ENCODE measurements at regions of chr3 and their contacts with region 1.

Region 1: DNA sequence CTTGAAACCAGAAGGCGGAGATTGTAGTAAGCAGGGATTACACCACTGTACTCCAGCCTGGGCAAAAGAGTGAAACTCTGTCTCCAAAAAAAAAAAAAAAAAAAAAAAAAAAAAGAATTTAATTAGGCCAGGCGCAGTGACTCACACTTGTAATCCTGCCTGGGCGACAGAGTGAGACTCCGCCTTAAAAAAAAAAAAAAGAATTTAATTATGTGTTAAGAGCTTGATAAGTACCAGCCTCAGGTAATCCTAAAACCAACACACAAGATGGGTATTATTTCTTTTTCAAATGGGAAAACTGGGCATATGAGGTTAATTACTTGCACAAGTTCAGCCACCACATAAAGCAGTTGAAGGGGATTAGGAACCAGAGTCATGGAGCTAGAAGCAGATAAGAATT is 49.0 kb downstream of the PBRM1 start:
- DNase-seq: no peak
- H3K4me3 ChIP-seq: no peak overlapping the region
- CTCF ChIP-seq: no peak

Region 2: GRCh38 chr3:51371943-51372557 is 1264.6 kb before region 1 on chr3:
- CTCF ChIA-PET with region 1: no interaction called
- POLR2A ChIA-PET with region 1: no interaction called
- DNase-seq: peak; percentile 29
- H3K4me3 ChIP-seq: no peak overlapping the region
- CTCF ChIP-seq: peak; percentile 70

Region 3: GRCh38 chr3:52623234-52623792 is 13.4 kb before region 1 on chr3:
- CTCF ChIA-PET with region 1: interaction called, 10 read pairs
- POLR2A ChIA-PET with region 1: no interaction called
- DNase-seq: no peak
- H3K4me3 ChIP-seq: no peak overlapping the region
- CTCF ChIP-seq: no peak

Measured in AG04449 (cell line).